Natural killer cell (primary cell): ENCODE measurements at regions of chr9 and their contacts with region 1.

Region 1: DNA sequence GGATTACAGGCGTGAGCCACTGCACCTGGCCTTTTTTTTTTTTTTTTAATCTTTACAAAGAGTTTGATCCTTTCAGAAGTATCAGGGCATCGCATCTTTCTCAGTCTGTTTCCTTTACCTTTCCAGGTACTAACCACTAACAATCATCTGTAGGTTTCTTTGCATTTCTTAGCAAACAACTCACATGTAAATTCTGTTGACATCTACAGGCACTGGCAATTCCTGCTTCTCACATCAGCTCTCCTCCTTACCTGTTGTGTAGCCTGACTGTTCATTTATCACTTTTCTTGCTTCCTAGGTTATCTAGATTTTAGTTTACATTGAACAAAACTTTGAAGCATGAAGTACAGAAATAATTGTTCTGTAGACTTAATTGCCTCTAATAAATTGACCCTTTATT is 27.5 kb upstream of the VPS13A start:
- DNase-seq: no peak
- ATAC-seq: no peak
- H3K4me3 ChIP-seq: no peak overlapping the region
- H3K4me3 Mint-ChIP-seq: no peak overlapping the region
- H3K27ac ChIP-seq: no peak overlapping the region
- H3K27ac Mint-ChIP-seq: no peak overlapping the region
- H3K4me1 ChIP-seq: no peaks in the 10 kb centered on the region
- H3K4me1 Mint-ChIP-seq: no peaks in the 10 kb centered on the region
- H3K27me3 ChIP-seq: no peaks in the 10 kb centered on the region
- H3K27me3 Mint-ChIP-seq: peaks cover 16 to 25% of the 10 kb centered on the region in 2 donors
- CTCF ChIP-seq: no peak

Region 2: GRCh38 chr9:76451234-76451633 is 698.6 kb before region 1 on chr9:
- intact Hi-C with region 1: loop called (anchors 2 kb)
- DNase-seq: no peak
- ATAC-seq: no peak
- H3K4me3 ChIP-seq: no peak overlapping the region
- H3K4me3 Mint-ChIP-seq: no peak overlapping the region
- H3K27ac ChIP-seq: no peak overlapping the region
- H3K27ac Mint-ChIP-seq: no peak overlapping the region
- H3K4me1 ChIP-seq: peaks cover 6% of the 10 kb centered on the region
- H3K4me1 Mint-ChIP-seq: peaks cover 7% of the 10 kb centered on the region in 2 donors
- H3K27me3 ChIP-seq: no peaks in the 10 kb centered on the region
- H3K27me3 Mint-ChIP-seq: no peaks in the 10 kb centered on the region
- CTCF ChIP-seq: no peak

Region 3: GRCh38 chr9:76810377-76810957 is 339.4 kb before region 1 on chr9:
- intact Hi-C with region 1: loop called (anchors 5 kb)
- DNase-seq: peak in 1 of 2 donors; percentile 18
- ATAC-seq: no peak
- H3K4me3 ChIP-seq: no peak overlapping the region
- H3K4me3 Mint-ChIP-seq: no peak overlapping the region
- H3K27ac ChIP-seq: no peak overlapping the region
- H3K27ac Mint-ChIP-seq: no peak overlapping the region
- H3K4me1 ChIP-seq: no peaks in the 10 kb centered on the region
- H3K4me1 Mint-ChIP-seq: no peaks in the 10 kb centered on the region
- H3K27me3 ChIP-seq: no peaks in the 10 kb centered on the region
- H3K27me3 Mint-ChIP-seq: peaks cover 9 to 21% of the 10 kb centered on the region in 2 donors
- CTCF ChIP-seq: peak; percentile 15

Region 4: DNA sequence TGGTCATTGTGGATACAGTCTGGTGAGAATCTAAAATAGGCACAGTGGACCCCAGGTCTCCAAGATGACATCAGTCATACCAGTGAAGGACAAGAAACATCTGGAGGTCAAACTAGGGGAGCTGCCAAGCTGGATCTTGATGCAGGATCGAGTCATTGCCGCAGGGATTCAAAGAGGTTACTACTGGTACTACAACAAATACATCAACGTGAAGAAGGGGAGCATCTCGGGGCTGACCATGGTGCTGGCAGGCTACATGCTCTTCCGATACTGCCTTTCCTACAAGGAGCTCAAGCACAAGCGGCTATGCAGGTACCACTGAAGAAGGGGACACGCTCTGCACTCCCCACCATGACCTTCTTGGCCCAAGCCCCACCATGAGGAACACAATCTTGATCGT is 109.5 kb before region 1 on chr9:
- intact Hi-C with region 1: no loop called
- DNase-seq: no peak
- ATAC-seq: no peak
- H3K4me3 ChIP-seq: no peak overlapping the region
- H3K4me3 Mint-ChIP-seq: no peak overlapping the region
- H3K27ac ChIP-seq: no peak overlapping the region
- H3K27ac Mint-ChIP-seq: no peak overlapping the region
- H3K4me1 ChIP-seq: no peaks in the 10 kb centered on the region
- H3K4me1 Mint-ChIP-seq: no peaks in the 10 kb centered on the region
- H3K27me3 ChIP-seq: no peaks in the 10 kb centered on the region
- H3K27me3 Mint-ChIP-seq: peaks cover 0 to 5% of the 10 kb centered on the region in 2 donors
- CTCF ChIP-seq: no peak